SK-N-SH (cell line): ENCODE measurements at regions of chr10 and their contacts with region 1.

Region 1: DNA sequence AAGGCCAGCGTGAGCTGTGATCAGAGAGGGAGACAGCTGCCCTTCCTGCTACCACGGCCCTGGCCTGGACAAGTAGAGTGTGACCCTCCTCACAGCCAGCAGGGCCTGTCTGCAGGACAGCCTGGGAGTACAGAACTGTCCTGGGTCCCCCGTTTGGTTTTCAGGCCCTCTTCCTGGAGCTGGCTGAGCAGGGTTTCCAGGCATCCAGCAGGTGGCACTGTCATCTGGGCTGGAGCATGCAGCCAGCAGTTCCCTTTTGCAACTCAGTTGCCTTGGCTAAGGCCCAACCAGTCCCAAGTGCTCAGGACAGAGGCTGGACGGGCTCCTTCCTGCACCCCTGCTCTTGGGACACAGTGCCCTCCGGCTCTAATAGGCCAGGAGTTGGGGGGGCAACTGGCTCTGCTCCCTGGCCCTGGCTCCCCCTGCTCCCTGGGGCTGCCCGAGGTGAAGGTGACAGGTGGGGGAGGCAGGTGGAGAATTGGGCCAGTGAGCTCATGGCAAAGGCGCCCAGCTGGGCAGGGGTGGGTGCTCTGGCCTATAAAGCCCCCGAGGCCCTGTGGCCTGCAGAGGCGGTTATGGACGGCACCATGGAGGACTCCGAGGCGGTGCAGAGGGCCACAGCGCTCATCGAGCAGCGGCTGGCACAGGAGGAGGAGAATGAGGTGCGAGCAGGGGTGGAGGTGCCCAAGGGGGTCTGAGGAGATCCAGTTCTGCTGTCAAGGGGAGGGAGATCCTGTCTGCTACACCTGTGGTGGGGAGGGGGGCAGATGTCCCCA is at the start of gene ANKRD2:
- DNase-seq: peak; percentile 87
- H3K4me3 ChIP-seq: peak within 1 kb of the TSS in 1 of 2 experiments; percentile 18; a peak in 1 of 4 replicates
- H3K27ac ChIP-seq: peak within 1 kb of the TSS; percentile 74 to 83
- H3K4me1 ChIP-seq: peaks cover 21 to 35% of the 10 kb centered on the region in 2 experiments; a peak in 3 of 4 replicates
- H3K27me3 ChIP-seq: no peaks in the 10 kb centered on the region
- CTCF ChIP-seq: peak; percentile 85
- EP300 ChIP-seq: no peak
- RAD21 ChIP-seq: peak; percentile 83
- polyA plus RNA-seq, gene ANKRD2: 0.72 and 0.99 TPM in 2 replicates

Region 2: GRCh38 chr10:97463363-97464132 is 108.9 kb before region 1 on chr10:
- CTCF ChIA-PET with region 1: interaction called, 10 read pairs
- POLR2A ChIA-PET with region 1: no interaction called
- DNase-seq: peak; percentile 70
- H3K4me3 ChIP-seq: no peak overlapping the region
- H3K27ac ChIP-seq: peak overlapping the region; percentile 32 to 59; a peak in 3 of 4 replicates
- H3K4me1 ChIP-seq: peaks cover 0 to 4% of the 10 kb centered on the region in 2 experiments; a peak in 2 of 4 replicates
- H3K27me3 ChIP-seq: no peaks in the 10 kb centered on the region
- CTCF ChIP-seq: peak; percentile 89
- EP300 ChIP-seq: no peak
- RAD21 ChIP-seq: peak; percentile 83

Region 3: DNA sequence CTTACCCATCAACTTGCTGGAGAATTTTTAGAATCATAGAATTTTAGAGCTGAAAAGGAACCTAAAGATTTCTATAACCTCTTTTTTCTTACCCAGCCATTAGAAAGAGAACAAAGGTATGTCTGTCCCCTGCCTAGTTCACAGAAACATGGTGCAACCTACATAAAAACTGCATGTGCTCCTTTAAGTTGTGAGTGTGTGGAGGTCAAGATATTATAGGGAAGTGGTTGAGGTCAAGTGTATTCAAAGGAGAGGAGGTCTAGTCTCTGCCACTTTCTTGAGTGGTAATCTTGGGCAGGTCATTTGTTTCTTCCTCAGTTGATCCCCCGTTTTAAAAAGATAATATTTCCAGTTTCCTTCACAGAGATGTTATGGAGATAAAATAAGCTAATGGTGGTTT is 67.2 kb before region 1 on chr10:
- CTCF ChIA-PET with region 1: no interaction called
- POLR2A ChIA-PET with region 1: no interaction called
- DNase-seq: no peak
- H3K4me3 ChIP-seq: no peak overlapping the region
- H3K27ac ChIP-seq: no peak overlapping the region
- H3K4me1 ChIP-seq: peaks cover 0 to 1% of the 10 kb centered on the region in 2 experiments; a peak in 1 of 4 replicates
- H3K27me3 ChIP-seq: no peaks in the 10 kb centered on the region
- CTCF ChIP-seq: no peak
- EP300 ChIP-seq: no peak
- RAD21 ChIP-seq: no peak

Region 4: GRCh38 chr10:97584060-97584797 is 11.8 kb after region 1 on chr10 and contains the start of gene HOGA1:
- CTCF ChIA-PET with region 1: interaction called, 60 read pairs
- POLR2A ChIA-PET with region 1: no interaction called
- DNase-seq: peak; percentile 89
- H3K4me3 ChIP-seq: no peak within 1 kb of the TSS; a peak in 1 of 4 replicates
- H3K27ac ChIP-seq: peak within 1 kb of the TSS; percentile 16 to 72; a peak in 3 of 4 replicates
- H3K4me1 ChIP-seq: peaks cover 0 to 21% of the 10 kb centered on the region in 2 experiments; a peak in 1 of 4 replicates
- H3K27me3 ChIP-seq: no peaks in the 10 kb centered on the region
- CTCF ChIP-seq: no peak
- EP300 ChIP-seq: no peak
- RAD21 ChIP-seq: no peak
- polyA plus RNA-seq, gene HOGA1: 2.9 and 4.8 TPM in 2 replicates

Region 5: GRCh38 chr10:97612386-97612785 is 40.0 kb after region 1 on chr10:
- CTCF ChIA-PET with region 1: interaction called, 28 read pairs
- POLR2A ChIA-PET with region 1: no interaction called
- DNase-seq: peak; percentile 45
- H3K4me3 ChIP-seq: no peak overlapping the region
- H3K27ac ChIP-seq: no peak overlapping the region
- H3K4me1 ChIP-seq: no peaks in the 10 kb centered on the region; a peak in 1 of 4 replicates
- H3K27me3 ChIP-seq: no peaks in the 10 kb centered on the region
- CTCF ChIP-seq: peak; percentile 68
- EP300 ChIP-seq: no peak
- RAD21 ChIP-seq: peak; percentile 76

Region 6: DNA sequence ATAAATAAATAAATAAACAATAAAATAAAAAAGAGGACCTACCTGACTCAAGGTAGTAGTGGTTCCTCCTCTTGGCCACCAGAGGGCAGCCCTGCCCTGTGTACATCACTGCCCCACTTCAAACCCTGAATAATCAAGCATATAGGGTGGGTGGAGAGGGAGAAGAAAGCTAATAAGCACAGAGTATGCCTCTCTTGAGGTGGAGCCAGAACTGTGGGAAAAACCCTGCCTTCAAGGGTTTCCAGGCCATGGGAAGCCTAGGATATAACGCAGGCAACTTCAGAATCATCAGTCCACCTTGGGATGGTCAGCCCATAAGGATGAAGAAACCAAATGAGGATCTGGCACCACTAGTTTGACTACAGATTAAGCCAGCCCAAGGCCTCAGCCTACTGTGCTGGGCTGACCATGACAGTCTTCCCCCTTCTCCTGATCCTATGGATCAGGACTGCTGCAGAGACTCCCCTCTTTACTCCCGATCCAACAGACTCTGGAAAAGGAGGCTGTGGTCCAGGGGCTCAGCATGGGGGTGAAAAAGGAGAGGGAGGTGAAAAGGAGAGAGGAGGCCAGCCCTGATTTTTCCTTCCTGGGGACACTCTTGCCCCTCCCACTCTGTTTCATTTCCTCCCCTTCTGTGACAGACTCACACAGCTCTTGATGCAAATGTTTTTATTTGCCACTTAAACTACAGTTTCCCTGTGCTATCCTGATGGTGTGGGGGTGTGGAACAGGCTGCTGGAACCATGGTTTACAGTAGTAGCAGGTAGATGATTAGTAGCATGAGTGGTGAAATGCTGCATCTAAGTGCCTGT is 104.6 kb after region 1 on chr10:
- CTCF ChIA-PET with region 1: interaction called, 15 read pairs
- POLR2A ChIA-PET with region 1: no interaction called
- DNase-seq: peak; percentile 82
- H3K4me3 ChIP-seq: no peak overlapping the region; a peak in 1 of 4 replicates
- H3K27ac ChIP-seq: no peak overlapping the region; a peak in 1 of 4 replicates
- H3K4me1 ChIP-seq: peaks cover 1 to 6% of the 10 kb centered on the region in 2 experiments; a peak in 1 of 4 replicates
- H3K27me3 ChIP-seq: no peaks in the 10 kb centered on the region
- CTCF ChIP-seq: peak; percentile 82
- EP300 ChIP-seq: no peak
- RAD21 ChIP-seq: peak; percentile 85

Region 7: GRCh38 chr10:97714048-97714371 is 141.6 kb after region 1 on chr10:
- CTCF ChIA-PET with region 1: interaction called, 15 read pairs
- POLR2A ChIA-PET with region 1: no interaction called
- DNase-seq: no peak
- H3K4me3 ChIP-seq: peak overlapping the region; percentile 64 to 71
- H3K27ac ChIP-seq: peak overlapping the region; percentile 64 to 84
- H3K4me1 ChIP-seq: peaks cover 19 to 27% of the 10 kb centered on the region in 2 experiments; a peak in 3 of 4 replicates
- H3K27me3 ChIP-seq: no peaks in the 10 kb centered on the region
- CTCF ChIP-seq: peak; percentile 29; the same call in 1 of the 2 replicates
- EP300 ChIP-seq: no peak
- RAD21 ChIP-seq: no peak

Region 8: GRCh38 chr10:97974526-97975525 is 402.4 kb after region 1 on chr10:
- CTCF ChIA-PET with region 1: no interaction called
- POLR2A ChIA-PET with region 1: no interaction called
- DNase-seq: peak; percentile 13
- H3K4me3 ChIP-seq: no peak overlapping the region
- H3K27ac ChIP-seq: no peak overlapping the region
- H3K4me1 ChIP-seq: no peaks in the 10 kb centered on the region
- H3K27me3 ChIP-seq: no peaks in the 10 kb centered on the region
- CTCF ChIP-seq: no peak
- EP300 ChIP-seq: no peak
- RAD21 ChIP-seq: no peak